ENCODE measurements at regions of chr14 and their contacts with region 1.

Region 1: DNA sequence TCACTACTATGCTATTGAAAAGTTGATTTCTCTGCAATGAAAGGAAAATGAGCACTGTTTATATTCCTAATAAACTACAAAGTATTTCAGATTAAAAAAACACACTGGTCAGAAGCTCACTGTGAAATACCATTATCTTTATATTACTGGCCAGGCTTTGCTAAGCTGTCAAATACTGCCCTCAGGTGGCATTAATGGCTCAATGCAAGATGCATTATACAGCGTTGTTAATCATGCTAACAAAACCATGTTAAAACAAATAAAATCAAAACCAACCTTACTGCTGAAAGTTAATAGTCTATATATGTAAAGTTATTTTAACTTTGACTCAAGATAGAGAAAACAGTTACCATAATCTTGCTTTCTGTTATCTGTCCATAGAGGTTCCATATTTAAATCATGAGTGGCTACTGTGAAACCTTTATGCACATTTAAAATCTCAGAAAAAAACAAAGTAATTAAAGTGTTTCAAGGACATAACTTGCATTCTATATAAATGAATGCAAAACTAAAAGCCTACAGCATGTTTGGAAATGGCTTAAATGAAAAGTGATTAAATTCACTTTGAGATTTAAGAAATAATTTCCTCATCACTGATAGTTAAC is 121.7 kb downstream of the RALGAPA1 start:
- DNase-seq: peak; percentile 25
- H3K4me3 ChIP-seq: no peak overlapping the region
- H3K27ac ChIP-seq: no peak overlapping the region
- H3K4me1 ChIP-seq: no peaks in the 10 kb centered on the region
- H3K27me3 ChIP-seq: no peaks in the 10 kb centered on the region
- CTCF ChIP-seq: peak; percentile 82 to 91

Region 2: DNA sequence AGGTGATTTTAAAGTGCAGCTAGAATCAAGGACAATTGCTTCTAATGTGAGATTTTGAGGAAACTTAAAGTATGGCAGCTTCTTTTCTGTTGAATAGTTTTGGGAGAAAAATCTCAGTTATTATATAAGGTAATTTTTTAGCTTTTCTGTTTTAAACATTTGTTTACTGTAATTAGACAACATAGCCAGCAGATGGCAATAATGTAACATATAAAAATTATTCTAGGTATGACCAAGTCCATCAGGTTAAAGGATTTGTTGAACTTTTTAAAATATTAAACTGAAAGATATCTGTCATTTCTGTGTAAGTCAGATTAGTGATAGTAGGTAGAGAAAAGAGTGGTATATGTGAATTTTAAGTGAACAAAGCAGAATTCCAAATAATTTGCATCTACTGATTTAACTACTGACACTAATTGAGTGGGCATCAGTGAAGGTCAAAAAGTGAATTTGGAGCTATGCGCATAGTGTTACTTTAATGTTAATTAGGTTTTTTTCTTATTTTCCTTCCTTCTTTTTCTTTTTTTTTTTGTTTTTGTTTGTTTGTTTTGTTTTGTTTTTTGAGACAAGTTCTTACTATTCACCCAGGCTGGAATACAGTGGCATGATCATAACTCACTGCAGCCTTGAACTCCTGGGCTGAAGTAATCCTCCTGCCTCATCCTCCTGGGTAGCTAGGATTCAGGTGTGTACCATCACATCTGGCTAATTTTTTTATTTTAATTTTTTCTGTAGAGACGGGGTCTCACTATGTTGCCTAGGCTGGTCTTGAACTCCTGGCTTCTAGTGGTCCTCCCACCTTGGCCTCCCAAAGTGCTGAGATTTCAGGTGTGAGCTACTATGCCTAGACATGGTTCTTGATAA is 546.5 kb before region 1 on chr14:
- CTCF ChIA-PET with region 1: no interaction called
- dilution Hi-C with region 1: no loop called
- in situ Hi-C with region 1: no loop called
- intact Hi-C with region 1: loop called (anchors 5 kb)
- DNase-seq: no peak
- H3K4me3 ChIP-seq: no peak overlapping the region
- H3K27ac ChIP-seq: no peak overlapping the region
- H3K4me1 ChIP-seq: no peaks in the 10 kb centered on the region
- H3K27me3 ChIP-seq: no peaks in the 10 kb centered on the region
- CTCF ChIP-seq: peak; percentile 16 to 34

Region 3: DNA sequence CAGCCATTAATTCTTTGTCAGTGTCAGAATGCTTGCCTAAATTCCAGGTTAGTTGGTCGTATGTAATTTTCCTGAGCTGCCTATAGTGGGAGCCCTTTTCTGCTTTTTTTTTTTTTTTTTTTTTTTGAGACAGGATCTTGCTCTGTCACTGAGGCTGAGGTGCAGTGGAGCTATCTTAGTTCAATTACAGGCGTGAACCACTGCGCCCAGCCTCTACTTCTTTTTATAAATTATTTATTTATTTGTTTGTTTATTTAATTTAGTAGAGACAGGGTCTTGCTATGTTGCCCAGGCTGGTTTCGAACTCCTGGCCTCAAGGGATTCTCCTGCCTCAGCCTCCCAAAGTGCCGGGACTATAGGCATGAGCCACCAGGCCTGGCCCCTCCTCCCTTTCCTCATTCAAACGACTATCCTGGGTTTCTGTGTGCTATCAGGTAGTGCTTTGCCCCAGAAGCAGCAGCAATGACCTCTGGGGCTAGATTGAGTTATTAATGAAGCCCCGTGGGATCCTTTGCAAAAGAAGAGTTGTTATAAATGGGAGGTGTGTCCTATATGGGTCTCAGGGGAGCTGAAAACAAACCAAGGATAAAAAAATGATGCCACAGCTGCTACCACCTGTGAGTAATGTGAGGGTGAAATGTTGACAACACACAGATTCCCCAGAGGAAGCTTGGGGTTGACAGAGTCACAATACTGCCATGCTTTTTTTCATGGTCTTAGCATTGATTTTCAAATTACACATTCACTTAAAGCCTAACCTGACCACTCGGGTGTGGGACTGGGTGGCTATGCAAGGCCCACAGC is 248.3 kb before region 1 on chr14:
- CTCF ChIA-PET with region 1: no interaction called
- dilution Hi-C with region 1: no loop called
- in situ Hi-C with region 1: loop called (anchors 25 kb)
- intact Hi-C with region 1: loop called (anchors 2 kb)
- DNase-seq: no peak
- H3K4me3 ChIP-seq: no peak overlapping the region
- H3K27ac ChIP-seq: no peak overlapping the region
- H3K4me1 ChIP-seq: no peaks in the 10 kb centered on the region
- H3K27me3 ChIP-seq: no peaks in the 10 kb centered on the region
- CTCF ChIP-seq: peak; percentile 62 to 73

Region 4: DNA sequence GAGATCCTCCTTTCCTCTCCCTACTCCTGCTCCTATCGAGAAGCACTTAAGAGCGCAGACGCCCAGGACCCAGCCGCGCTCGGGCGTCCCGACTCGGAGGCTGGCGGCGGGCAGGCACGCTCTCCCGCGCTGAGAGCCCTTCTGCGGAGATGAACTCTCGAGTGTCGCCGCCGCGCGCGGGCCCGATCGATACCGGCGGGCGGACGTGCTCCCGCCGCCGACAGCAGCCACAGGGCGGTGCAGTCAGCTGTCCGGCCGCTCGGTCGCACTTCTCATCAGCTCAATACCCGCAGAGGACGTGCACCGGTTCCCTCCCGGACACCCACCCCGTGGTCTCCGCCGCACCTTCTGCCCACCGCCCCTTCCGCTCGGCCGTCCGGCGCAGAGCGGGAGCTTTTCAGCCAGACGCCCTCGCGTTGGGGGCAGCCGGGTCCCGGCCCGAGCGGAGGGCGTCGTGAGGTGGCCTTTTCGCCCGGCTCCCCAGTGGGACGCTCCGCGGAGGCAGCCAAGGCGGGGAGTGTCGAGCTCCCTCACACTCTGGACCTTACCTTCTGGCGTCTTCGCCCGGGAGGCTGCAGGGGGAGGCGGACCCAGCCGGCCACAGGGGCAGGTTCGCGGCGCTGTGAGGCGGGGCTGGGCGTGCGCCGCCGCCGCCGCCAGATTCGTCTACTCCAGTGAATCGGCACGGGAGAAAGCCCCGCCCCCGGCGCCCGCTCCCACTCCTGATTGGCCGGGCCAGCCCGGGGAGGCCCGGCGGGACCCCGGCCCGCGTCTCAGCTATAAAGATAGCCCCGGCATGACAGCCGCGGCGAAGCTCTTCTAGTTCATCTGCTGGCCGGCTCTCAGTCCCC is 153.9 kb before region 1 on chr14 and contains the start of gene INSM2:
- CTCF ChIA-PET with region 1: no interaction called
- dilution Hi-C with region 1: no loop called
- in situ Hi-C with region 1: no loop called
- intact Hi-C with region 1: loop called (anchors 1 kb)
- DNase-seq: peak; percentile 63
- H3K4me3 ChIP-seq: peak within 1 kb of the TSS; percentile 61 to 71 (median 64)
- H3K27ac ChIP-seq: no peak within 1 kb of the TSS
- H3K4me1 ChIP-seq: peaks cover 22% of the 10 kb centered on the region
- H3K27me3 ChIP-seq: peaks cover 21% of the 10 kb centered on the region
- CTCF ChIP-seq: peak in 1 of 2 donors; percentile 10
- total RNA-seq, gene INSM2: not detected

Region 5: GRCh38 chr14:35607397-35607796 is 80.0 kb before region 1 on chr14:
- CTCF ChIA-PET with region 1: no interaction called
- dilution Hi-C with region 1: no loop called
- in situ Hi-C with region 1: no loop called
- intact Hi-C with region 1: no loop called
- DNase-seq: no peak
- H3K4me3 ChIP-seq: no peak overlapping the region
- H3K27ac ChIP-seq: no peak overlapping the region
- H3K4me1 ChIP-seq: no peaks in the 10 kb centered on the region
- H3K27me3 ChIP-seq: no peaks in the 10 kb centered on the region
- CTCF ChIP-seq: no peak

Region 6: DNA sequence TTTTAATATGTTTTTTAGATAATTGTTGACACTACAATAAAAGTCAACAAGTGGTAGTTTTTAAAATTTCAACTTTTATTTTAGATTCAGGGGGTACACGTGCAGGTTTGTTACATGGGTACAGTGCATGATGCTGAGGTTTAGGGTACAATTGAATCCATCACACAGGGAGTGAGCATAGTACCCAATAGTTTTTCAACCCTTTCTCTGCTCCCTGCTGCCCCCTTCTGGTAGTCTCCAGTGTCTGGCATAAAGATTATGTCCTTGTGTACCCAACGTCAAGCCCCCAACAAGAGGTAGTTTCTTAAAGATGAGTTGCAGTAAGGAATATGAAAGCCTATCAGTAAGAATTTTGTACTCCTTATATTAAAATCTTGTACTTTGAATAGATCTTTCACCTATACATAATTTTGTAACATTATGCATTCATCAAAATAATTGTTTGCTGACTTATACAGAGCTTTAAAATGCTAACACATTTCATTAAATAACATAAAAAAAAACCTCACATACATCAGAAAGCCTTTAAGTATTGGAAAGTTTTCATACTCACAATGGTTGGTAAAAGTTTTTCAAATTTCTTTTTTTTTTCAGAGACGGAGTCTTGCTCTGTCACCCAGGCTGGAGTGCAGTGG is 127.1 kb after region 1 on chr14:
- CTCF ChIA-PET with region 1: no interaction called
- dilution Hi-C with region 1: no loop called
- in situ Hi-C with region 1: no loop called
- intact Hi-C with region 1: loop called (anchors 1 kb)
- DNase-seq: peak; percentile 23
- H3K4me3 ChIP-seq: no peak overlapping the region
- H3K27ac ChIP-seq: no peak overlapping the region
- H3K4me1 ChIP-seq: peaks cover under 1% of the 10 kb centered on the region
- H3K27me3 ChIP-seq: no peaks in the 10 kb centered on the region
- CTCF ChIP-seq: peak; percentile 76 to 88